GM10248 (cell line): ENCODE measurements at regions of chr17 and their contacts with region 1.

Region 1: DNA sequence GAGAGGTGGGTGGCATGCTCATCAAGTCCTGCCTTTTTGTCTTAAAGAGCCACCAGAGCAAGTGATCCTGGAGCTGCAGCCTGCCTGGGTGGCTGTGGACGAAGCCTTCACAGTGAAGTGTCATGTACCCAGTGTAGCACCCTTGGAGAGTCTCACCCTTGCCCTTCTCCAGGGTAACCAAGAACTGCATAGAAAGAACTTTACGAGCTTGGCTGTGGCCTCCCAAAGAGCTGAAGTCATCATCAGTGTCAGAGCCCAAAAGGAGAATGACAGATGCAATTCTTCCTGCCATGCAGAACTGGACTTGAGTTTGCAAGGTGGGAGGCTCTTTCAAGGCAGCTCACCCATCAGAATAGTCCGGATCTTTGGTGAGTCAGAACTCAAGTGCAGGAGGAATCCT is 14.2 kb downstream of the CSH2 start:
- DNase-seq: no peak
- CTCF ChIP-seq: no peak

Region 2: GRCh38 chr17:63881876-63882601 is 22.8 kb after region 1 on chr17 and contains the start of gene GH2:
- CTCF ChIA-PET with region 1: interaction called, 14 read pairs
- POLR2A ChIA-PET with region 1: no interaction called
- DNase-seq: peak; percentile 80
- CTCF ChIP-seq: peak; percentile 67